Activated CD4-positive, alpha-beta memory T cell treated with anti-CD3 and anti-CD28 coated beads, Interleukin-2, amount 10 ng/mL, durations not matched to agents 7 days and 5 days (primary cell): ENCODE measurements at regions of chr4 and their contacts with region 1.

Region 1: DNA sequence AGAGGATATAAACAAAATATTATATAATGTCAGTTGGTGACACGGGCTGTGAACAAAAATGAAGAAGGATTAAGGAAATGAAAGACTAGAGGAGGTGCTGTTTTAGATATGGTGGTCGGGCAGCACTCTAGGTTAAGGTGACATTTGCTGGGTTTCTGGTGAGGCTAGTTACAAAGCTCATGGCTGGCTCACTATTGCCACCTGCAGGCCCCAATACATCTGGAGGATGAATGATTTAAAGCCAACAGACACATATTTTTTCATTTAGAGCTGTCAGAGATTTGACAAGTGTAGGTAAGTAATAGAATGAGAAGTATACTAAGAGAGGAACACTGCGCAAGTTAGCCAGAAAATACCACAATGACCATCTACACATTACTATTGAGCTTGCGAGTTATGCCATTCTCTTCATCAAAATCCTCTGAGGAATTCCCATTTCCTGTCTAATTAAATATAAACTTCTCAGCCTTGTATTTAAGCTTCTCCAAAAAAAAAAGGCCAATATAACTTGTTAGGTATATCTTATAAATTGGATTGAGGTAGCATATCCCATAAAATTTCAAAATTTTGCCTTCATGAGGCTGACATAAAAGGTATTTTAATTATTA is 6.4 kb upstream of the FGG start:
- DNase-seq: peak; percentile 58
- H3K4me3 Mint-ChIP-seq: no peak overlapping the region
- H3K27ac Mint-ChIP-seq: no peak overlapping the region
- H3K4me1 Mint-ChIP-seq: peaks cover 12% of the 10 kb centered on the region
- H3K27me3 Mint-ChIP-seq: peaks cover 8% of the 10 kb centered on the region

Region 2: DNA sequence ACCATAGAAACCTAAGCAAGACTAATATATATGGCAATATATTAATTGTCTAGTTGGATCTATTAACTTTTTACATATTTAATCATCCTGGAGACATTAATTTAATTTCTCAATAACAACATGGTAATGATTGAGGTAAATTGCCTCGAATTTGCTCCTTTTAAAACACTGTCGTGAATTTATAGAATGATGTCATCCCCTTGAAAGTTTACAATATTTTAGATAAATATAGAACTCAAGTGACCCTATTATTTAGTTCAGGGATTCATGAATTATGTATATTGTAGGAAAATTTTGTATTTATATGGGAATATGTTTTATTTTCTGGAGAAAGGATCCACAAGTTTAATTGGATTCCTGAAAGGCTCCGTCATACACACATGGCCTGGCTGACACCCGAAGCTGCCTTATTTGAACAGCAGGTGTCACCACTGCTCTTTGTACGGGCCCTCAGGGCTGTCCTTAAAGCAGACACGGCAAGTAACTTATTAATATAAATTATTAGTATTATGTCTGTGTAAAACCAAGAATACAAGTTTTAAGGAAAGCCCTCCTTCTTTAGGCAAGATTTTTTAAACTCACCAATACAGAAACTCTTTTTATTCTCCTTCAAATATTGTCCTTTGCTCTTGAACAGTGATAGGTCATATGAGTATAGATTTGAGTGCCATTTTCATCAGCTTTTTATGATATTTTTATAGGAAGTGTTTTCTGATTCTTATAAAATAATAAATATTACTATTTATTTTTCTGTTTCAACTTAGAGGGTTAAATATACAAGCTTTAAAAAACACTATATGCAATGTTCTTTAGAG is 66.7 kb before region 1 on chr4:
- CTCF ChIA-PET with region 1: interaction called, 107 read pairs
- POLR2A ChIA-PET with region 1: interaction called, 8 read pairs
- DNase-seq: peak; percentile 76
- H3K4me3 Mint-ChIP-seq: no peak overlapping the region
- H3K27ac Mint-ChIP-seq: no peak overlapping the region
- H3K4me1 Mint-ChIP-seq: peaks cover 27% of the 10 kb centered on the region
- H3K27me3 Mint-ChIP-seq: no peaks in the 10 kb centered on the region

Region 3: DNA sequence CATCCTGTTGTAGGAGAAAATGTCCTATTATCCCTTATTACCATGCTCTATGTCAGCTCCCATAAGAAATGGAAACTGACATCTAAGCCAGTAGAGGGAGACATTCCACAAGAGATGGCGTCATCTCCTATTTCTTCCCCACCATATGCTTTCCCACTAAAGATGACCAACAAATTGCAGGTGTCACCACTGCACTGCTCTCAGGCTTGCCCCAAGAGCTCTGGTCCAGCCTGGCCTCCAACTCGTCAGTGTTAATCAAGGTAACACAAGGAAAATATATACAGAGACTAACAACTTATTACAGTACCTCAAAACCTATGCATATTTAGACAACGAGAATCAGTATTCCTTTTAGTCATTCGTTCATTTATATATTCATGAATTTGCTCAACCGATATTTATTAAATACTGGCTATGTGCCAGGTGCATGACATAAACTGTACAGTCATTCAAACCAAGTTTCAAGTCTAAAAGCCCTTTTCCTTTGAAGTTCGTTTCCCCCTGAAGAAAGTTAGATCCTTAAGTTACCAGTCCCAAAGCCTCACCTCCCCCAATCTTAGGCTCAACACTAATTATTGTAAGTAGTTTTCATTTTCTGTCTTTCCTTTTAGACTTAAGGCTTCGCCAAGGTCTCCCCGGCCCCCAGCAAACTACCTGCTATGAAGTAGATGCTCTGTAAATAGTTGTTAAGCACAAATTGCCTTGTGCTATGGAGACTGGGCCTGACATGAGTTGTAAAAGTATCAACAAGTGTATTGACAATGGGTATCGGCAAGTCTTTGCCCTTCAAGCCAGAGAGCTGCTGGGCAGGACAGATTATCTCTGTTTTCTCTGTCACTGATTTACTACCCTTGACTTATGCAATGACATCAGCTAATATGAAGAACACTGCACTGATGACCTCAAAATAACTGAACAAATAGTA is 59.1 kb before region 1 on chr4:
- CTCF ChIA-PET with region 1: interaction called, 42 read pairs
- POLR2A ChIA-PET with region 1: interaction called, 4 read pairs
- DNase-seq: no peak
- H3K4me3 Mint-ChIP-seq: no peak overlapping the region
- H3K27ac Mint-ChIP-seq: no peak overlapping the region
- H3K4me1 Mint-ChIP-seq: no peaks in the 10 kb centered on the region
- H3K27me3 Mint-ChIP-seq: peaks cover 7% of the 10 kb centered on the region

Region 4: GRCh38 chr4:154578919-154579318 is 39.9 kb before region 1 on chr4:
- CTCF ChIA-PET with region 1: no interaction called
- POLR2A ChIA-PET with region 1: no interaction called
- DNase-seq: no peak
- H3K4me3 Mint-ChIP-seq: no peak overlapping the region
- H3K27ac Mint-ChIP-seq: no peak overlapping the region
- H3K4me1 Mint-ChIP-seq: no peaks in the 10 kb centered on the region
- H3K27me3 Mint-ChIP-seq: peaks cover 9% of the 10 kb centered on the region